HepG2 (cell line): ENCODE measurements at regions of chr1 and their contacts with region 1.

Region 1: DNA sequence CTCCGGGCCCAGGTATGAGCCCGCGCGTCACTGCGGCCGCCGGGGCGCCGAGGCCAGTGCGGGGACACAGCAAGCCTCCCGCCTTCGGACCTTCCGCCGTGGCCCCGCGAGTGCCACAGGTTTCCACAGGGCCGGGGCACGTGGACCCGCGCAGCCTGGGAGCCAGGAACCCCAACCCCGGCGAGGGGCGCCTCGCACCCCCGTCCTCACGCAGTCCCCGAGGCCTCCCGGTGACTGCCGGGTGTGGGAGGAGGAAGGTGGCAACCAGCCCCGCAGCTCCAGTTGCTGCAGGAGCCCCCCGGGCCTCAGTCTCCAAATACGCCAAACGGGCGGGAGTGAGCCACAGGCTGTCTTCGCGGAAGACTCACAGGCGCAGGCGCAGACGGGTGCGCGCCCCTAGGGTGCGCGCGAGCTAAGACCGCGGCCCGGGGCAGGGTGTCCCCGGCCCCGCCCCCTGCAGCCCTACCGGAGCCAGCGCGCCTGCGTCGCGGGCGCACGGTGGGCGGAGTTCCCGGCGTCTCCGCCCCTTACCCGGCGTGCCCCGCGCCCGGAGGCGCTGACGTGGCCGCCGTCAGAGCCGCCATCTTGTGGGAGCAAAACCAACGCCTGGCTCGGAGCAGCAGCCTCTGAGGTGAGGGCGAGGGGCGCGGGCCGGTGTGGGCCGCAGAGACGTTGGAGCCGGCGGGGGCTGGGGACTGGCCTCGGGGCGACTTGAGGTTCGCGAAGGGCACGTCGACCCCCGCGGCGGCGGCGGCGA is at the start of gene ARF1:
- DNase-seq: peak; percentile 78
- ATAC-seq: peak; percentile 77
- H3K4me3 ChIP-seq: peak within 1 kb of the TSS; percentile 82 to 100 (median 85)
- H3K27ac ChIP-seq: peak within 1 kb of the TSS; percentile 86
- H3K4me1 ChIP-seq: peaks cover 41% of the 10 kb centered on the region
- H3K27me3 ChIP-seq: no peaks in the 10 kb centered on the region; a peak in 1 of 5 replicates
- CTCF ChIP-seq: no peak
- EP300 ChIP-seq: no peak
- POLR2A ChIP-seq: peak; percentile 81 to 83
- RAD21 ChIP-seq: no peak
- total RNA-seq, gene ARF1: 186 and 210 TPM in 2 replicates

Region 2: GRCh38 chr1:226940029-226940805 is 1142.1 kb before region 1 on chr1 and contains the start of gene COQ8A:
- CTCF ChIA-PET with region 1: no interaction called
- POLR2A ChIA-PET with region 1: no interaction called
- in situ Hi-C with region 1: no loop called
- intact Hi-C with region 1: loop called (anchors 10 kb)
- DNase-seq: peak; percentile 99
- ATAC-seq: peak; percentile 94
- H3K4me3 ChIP-seq: peak within 1 kb of the TSS; percentile 77 to 83 (median 80)
- H3K27ac ChIP-seq: peak within 1 kb of the TSS; percentile 97
- H3K4me1 ChIP-seq: peaks cover 62% of the 10 kb centered on the region
- H3K27me3 ChIP-seq: no peaks in the 10 kb centered on the region; a peak in 1 of 5 replicates
- CTCF ChIP-seq: peak; percentile 34; the same call in 1 of the 2 replicates
- EP300 ChIP-seq: no peak
- POLR2A ChIP-seq: no peak; a peak in 2 of 4 replicates
- RAD21 ChIP-seq: peak; percentile 61
- total RNA-seq, gene COQ8A: 63.3 and 88.7 TPM in 2 replicates

Region 3: GRCh38 chr1:227816750-227817446 is 265.4 kb before region 1 on chr1:
- CTCF ChIA-PET with region 1: no interaction called
- POLR2A ChIA-PET with region 1: no interaction called
- in situ Hi-C with region 1: no loop called
- intact Hi-C with region 1: no loop called
- DNase-seq: no peak
- ATAC-seq: no peak
- H3K4me3 ChIP-seq: no peak overlapping the region
- H3K27ac ChIP-seq: no peak overlapping the region
- H3K4me1 ChIP-seq: no peaks in the 10 kb centered on the region
- H3K27me3 ChIP-seq: no peaks in the 10 kb centered on the region
- CTCF ChIP-seq: no peak
- EP300 ChIP-seq: no peak
- POLR2A ChIP-seq: no peak
- RAD21 ChIP-seq: no peak

Region 4: GRCh38 chr1:228097328-228098081 is 15.2 kb after region 1 on chr1:
- CTCF ChIA-PET with region 1: no interaction called
- POLR2A ChIA-PET with region 1: interaction called, 10 read pairs
- in situ Hi-C with region 1: no loop called
- intact Hi-C with region 1: no loop called
- DNase-seq: no peak
- ATAC-seq: no peak
- H3K4me3 ChIP-seq: no peak overlapping the region
- H3K27ac ChIP-seq: no peak overlapping the region
- H3K4me1 ChIP-seq: peaks cover 15% of the 10 kb centered on the region
- H3K27me3 ChIP-seq: no peaks in the 10 kb centered on the region; a peak in 1 of 5 replicates
- CTCF ChIP-seq: no peak
- EP300 ChIP-seq: no peak
- POLR2A ChIP-seq: no peak
- RAD21 ChIP-seq: no peak

Region 5: DNA sequence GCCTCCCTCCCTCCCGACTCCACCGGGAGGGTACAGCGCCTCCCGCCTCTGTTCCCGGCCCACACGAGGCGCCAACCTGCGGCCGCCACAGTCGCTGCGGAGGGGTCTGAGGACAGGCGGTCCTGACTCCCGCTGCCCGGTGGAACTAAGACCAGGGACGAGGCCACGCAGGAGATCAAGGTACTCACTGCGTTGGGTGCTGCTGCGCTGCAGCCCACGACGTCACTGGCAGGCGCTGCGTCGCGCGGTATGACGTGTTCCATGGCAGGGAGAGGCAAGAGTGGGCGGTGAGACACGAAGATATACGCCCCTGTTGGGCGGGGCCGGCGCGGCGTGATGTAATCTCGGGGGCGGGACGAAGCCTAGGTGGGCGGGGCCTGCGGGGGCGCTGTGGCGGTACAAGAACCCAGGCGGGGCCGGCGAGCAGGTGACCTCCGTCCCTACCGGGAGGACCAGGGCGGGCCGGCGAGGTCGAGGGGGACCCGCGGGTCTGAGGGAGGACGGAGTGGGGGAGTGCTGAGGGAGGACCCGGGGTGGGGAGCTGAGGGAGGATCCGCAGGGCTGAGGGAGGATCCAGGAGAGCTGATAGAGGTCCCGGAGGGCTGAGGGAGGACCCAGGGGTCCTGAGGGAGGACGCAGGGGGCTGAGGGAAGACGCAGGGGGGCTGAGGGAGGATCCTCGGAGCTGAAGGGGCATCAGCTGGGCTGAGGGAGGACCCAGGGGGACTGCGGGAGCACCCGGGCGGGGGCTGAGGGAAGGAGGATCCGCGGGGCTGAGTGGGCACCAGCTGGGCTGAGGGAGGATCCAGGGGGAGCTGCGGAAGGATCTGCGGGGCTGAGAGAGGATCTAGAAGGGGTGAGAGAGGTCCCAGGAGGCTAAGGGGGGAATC is 27.0 kb after region 1 on chr1 and contains the start of gene MRPL55:
- CTCF ChIA-PET with region 1: no interaction called
- POLR2A ChIA-PET with region 1: interaction called, 18 read pairs
- in situ Hi-C with region 1: no loop called
- intact Hi-C with region 1: no loop called
- DNase-seq: peak; percentile 92
- ATAC-seq: peak; percentile 80
- H3K4me3 ChIP-seq: peak within 1 kb of the TSS; percentile 90 to 99 (median 97)
- H3K27ac ChIP-seq: peak within 1 kb of the TSS; percentile 90
- H3K4me1 ChIP-seq: peaks cover 34% of the 10 kb centered on the region
- H3K27me3 ChIP-seq: no peaks in the 10 kb centered on the region; a peak in 1 of 5 replicates
- CTCF ChIP-seq: peak; percentile 57
- EP300 ChIP-seq: peak; percentile 5 to 29; a peak in 1 of 4 replicates
- POLR2A ChIP-seq: peak in 1 of 2 experiments; percentile 95; a peak in 2 of 4 replicates
- RAD21 ChIP-seq: no peak
- total RNA-seq, gene MRPL55: 92.9 and 97.9 TPM in 2 replicates